ENCODE measurements at regions of chr7 and their contacts with region 1.

Region 1: GRCh38 chr7:122225874-122226273 is 78.7 kb downstream of the FEZF1 start:
- DNase-seq: no peak
- H3K4me3 ChIP-seq: no peak overlapping the region
- H3K27ac ChIP-seq: no peak overlapping the region
- H3K4me1 ChIP-seq: no peaks in the 10 kb centered on the region
- H3K27me3 ChIP-seq: no peaks in the 10 kb centered on the region
- CTCF ChIP-seq: no peak
- POLR2A ChIP-seq: no peak

Region 2: DNA sequence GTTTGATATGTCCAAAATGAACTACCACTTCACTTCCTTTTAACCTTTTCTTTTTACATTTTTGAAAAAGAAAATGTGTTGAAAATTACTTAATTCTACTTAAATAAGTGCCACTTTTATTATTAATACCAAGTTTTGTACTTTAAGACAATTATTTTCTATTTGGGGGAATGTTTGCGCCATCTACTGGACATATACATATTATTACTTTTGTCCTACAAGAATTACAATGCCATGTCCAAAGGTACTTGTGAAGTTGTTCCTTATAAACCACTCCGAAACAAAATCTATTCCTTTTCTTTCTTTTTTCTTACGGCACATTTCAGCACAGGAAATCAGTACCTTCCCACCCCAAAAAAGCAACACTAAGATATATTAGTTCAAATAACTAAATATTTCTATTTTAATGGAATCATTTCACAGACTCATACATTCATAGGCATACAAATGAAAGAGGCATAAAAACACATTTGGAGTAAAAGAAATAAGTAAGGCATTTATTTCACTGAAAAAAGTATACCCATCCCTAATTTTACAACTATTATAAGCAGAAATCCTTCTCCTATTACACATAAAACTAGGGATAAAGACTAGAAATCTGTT is 303.1 kb after region 1 on chr7:
- intact Hi-C with region 1: loop called (anchors 10 kb)
- DNase-seq: no peak
- H3K4me3 ChIP-seq: no peak overlapping the region
- H3K27ac ChIP-seq: no peak overlapping the region
- H3K4me1 ChIP-seq: no peaks in the 10 kb centered on the region
- H3K27me3 ChIP-seq: no peaks in the 10 kb centered on the region
- CTCF ChIP-seq: peak in 2 of 4 experiments; percentile 28 to 34
- POLR2A ChIP-seq: no peak

Measured in uterus (tissue), 4 donors.